ENCODE measurements at regions of chr21 and their contacts with region 1.

Region 1: GRCh38 chr21:36385233-36386030 is at the start of gene CHAF1B:
- DNase-seq: peak; percentile 89 to 99 (median 98)
- ATAC-seq: peak; percentile 96
- H3K4me3 ChIP-seq: peak within 1 kb of the TSS; percentile 95
- H3K27ac ChIP-seq: peak within 1 kb of the TSS; percentile 79
- H3K4me1 ChIP-seq: peaks cover 9 to 21% of the 10 kb centered on the region in 2 experiments; a peak in 4 of 5 replicates
- H3K27me3 ChIP-seq: no peaks in the 10 kb centered on the region
- CTCF ChIP-seq: no peak
- EP300 ChIP-seq: no peak
- POLR2A ChIP-seq: peak; percentile 68
- RAD21 ChIP-seq: no peak
- polyA plus RNA-seq, gene CHAF1B: 7.5 to 12.2 TPM

Region 2: DNA sequence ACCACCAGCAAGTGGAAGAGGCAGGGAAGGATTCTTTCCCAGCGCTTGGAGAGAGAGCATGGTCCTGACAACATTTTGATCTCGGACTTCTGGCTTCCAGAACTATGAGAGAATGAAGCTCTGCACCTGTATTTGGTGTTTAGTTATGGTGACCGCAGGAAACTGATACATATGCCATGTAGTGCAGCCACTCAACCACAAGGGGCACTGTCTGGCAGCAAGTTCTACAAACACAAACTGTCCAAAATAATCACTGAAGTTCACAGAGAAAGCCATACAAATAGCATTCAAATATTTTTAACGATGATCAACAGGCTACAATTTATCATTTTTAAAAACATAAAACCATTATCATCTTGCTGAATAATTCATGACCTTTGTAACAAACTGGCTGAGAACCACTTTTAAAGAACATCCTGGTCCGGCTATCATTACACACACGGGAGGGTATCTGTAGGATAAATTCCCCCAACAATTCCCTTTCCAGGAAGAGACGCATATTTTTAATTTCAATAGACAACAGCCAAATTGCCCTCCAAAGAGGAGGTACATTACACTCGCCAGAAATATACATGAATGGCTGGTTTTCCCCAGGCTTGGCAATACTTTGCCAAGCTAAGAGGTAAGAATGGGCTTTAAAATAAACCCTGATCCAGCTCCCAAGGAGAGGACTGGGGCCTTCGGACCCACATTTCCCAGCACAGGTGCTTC is 259.8 kb before region 1 on chr21:
- CTCF ChIA-PET with region 1: no interaction called
- POLR2A ChIA-PET with region 1: no interaction called
- in situ Hi-C with region 1: no loop called
- intact Hi-C with region 1: loop called (anchors 5 kb)
- DNase-seq: peak; percentile 58 to 70 (median 66)
- ATAC-seq: peak; percentile 73
- H3K4me3 ChIP-seq: no peak overlapping the region
- H3K27ac ChIP-seq: no peak overlapping the region
- H3K4me1 ChIP-seq: peaks cover 0 to 4% of the 10 kb centered on the region in 2 experiments; a peak in 1 of 5 replicates
- H3K27me3 ChIP-seq: peaks cover 19 to 42% of the 10 kb centered on the region in 2 experiments
- CTCF ChIP-seq: peak; percentile 82 to 95 (median 92)
- EP300 ChIP-seq: no peak
- POLR2A ChIP-seq: no peak
- RAD21 ChIP-seq: peak; percentile 40 to 68

Region 3: GRCh38 chr21:36288651-36289243 is 96.7 kb before region 1 on chr21:
- CTCF ChIA-PET with region 1: no interaction called
- POLR2A ChIA-PET with region 1: no interaction called
- in situ Hi-C with region 1: no loop called
- intact Hi-C with region 1: no loop called
- DNase-seq: no peak
- ATAC-seq: no peak
- H3K4me3 ChIP-seq: no peak overlapping the region
- H3K27ac ChIP-seq: no peak overlapping the region
- H3K4me1 ChIP-seq: no peaks in the 10 kb centered on the region
- H3K27me3 ChIP-seq: peaks cover 0 to 16% of the 10 kb centered on the region in 2 experiments
- CTCF ChIP-seq: no peak
- EP300 ChIP-seq: no peak
- POLR2A ChIP-seq: no peak
- RAD21 ChIP-seq: no peak

Region 4: GRCh38 chr21:36355868-36356267 is 29.6 kb before region 1 on chr21:
- CTCF ChIA-PET with region 1: no interaction called
- POLR2A ChIA-PET with region 1: no interaction called
- in situ Hi-C with region 1: no loop called
- intact Hi-C with region 1: no loop called
- DNase-seq: no peak
- ATAC-seq: no peak
- H3K4me3 ChIP-seq: no peak overlapping the region
- H3K27ac ChIP-seq: no peak overlapping the region
- H3K4me1 ChIP-seq: no peaks in the 10 kb centered on the region
- H3K27me3 ChIP-seq: no peaks in the 10 kb centered on the region
- CTCF ChIP-seq: no peak
- EP300 ChIP-seq: no peak
- POLR2A ChIP-seq: no peak
- RAD21 ChIP-seq: no peak

Region 5: DNA sequence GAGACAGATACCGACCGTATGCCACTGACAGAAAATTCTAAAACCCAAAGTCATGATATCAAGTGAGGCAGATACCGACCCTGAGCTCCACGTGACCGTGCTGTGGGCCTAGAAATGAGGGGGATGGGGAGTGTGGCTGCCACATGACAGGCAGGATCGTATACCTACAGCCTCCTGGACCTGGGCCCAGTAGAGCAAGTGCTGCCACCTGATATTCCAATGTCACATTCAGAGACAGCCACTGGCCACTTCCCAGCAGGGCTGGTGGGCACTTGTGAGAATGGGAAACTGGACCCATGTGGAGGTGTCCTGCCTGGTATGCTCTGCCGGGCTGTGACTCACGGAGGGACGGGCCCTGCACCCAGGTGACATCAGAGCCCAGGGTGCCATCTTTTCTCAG is 139.0 kb after region 1 on chr21:
- CTCF ChIA-PET with region 1: no interaction called
- POLR2A ChIA-PET with region 1: no interaction called
- in situ Hi-C with region 1: no loop called
- intact Hi-C with region 1: no loop called
- DNase-seq: no peak
- ATAC-seq: no peak
- H3K4me3 ChIP-seq: no peak overlapping the region
- H3K27ac ChIP-seq: no peak overlapping the region
- H3K4me1 ChIP-seq: no peaks in the 10 kb centered on the region
- H3K27me3 ChIP-seq: peaks cover 43 to 69% of the 10 kb centered on the region in 2 experiments
- CTCF ChIP-seq: no peak
- EP300 ChIP-seq: no peak
- POLR2A ChIP-seq: no peak
- RAD21 ChIP-seq: no peak

Region 6: DNA sequence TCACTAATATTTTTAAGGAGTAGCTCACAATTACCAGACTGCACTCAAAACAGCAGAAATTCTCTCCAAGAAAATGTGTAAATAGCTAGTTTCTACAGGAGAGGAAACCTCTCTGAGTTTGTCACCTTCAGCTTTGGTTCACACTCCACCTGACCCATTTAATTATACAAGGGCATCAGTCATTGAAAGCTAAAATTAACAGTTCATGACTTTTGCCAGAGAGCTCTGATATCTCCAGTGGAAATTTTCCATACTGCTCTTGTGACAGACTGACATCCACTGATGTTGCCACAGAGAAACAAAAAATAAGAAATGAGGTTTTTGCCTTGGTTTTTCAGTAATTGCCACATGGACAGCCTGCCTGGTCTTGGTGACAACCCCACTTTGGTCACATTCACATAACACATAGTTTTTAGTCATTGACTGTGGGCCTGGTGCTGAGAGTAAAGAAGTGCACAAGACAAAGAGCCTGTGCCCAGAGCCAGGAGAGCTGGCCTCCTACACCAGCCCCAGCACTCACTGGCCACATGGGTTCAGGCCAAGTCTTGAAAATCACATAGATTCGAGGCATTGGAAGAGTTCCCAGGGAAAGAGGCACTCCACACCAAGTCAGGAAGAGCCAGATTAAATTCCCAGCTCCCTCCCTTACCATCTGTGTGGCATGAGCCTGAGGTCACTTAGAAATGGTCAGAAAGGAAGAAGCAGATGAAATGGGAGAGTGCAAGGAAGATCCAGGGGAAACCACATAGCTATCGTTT is 299.7 kb after region 1 on chr21:
- CTCF ChIA-PET with region 1: no interaction called
- POLR2A ChIA-PET with region 1: no interaction called
- in situ Hi-C with region 1: no loop called
- intact Hi-C with region 1: no loop called
- DNase-seq: no peak
- ATAC-seq: no peak
- H3K4me3 ChIP-seq: no peak overlapping the region
- H3K27ac ChIP-seq: no peak overlapping the region
- H3K4me1 ChIP-seq: no peaks in the 10 kb centered on the region
- H3K27me3 ChIP-seq: peaks cover 15% of the 10 kb centered on the region in 2 experiments; a peak in 4 of 5 replicates
- CTCF ChIP-seq: no peak
- EP300 ChIP-seq: no peak
- POLR2A ChIP-seq: no peak
- RAD21 ChIP-seq: no peak